Gastrocnemius medialis (tissue), 4 donors: ENCODE measurements at regions of chr5 and their contacts with region 1.

Region 1: DNA sequence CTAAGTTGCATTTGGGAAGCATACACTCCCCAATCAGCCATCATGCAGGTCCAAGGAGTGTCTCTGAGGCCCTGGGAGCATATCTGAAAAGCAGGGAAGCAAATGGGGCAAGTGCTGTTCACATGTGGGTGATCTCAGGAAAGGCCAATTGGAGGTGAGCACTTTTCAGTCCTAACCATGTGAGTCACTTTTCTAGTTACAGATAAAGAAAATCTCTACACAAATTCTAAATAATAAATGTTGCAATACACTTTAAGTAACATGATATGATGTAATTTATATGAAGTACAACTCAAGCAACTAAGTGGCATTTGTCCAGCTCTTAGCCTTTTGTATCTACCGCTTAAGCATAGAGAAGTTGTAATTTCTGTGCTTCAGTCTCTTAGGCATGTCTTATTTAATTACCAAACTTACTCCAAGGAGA is 18.4 kb downstream of the ADAMTS16 start:
- DNase-seq: no peak
- ATAC-seq: no peak
- H3K4me3 ChIP-seq: no peak overlapping the region
- H3K27ac ChIP-seq: no peak overlapping the region
- H3K4me1 ChIP-seq: peaks cover 25% of the 10 kb centered on the region in 2 donors
- H3K27me3 ChIP-seq: no peaks in the 10 kb centered on the region
- CTCF ChIP-seq: no peak
- POLR2A ChIP-seq: no peak

Region 2: GRCh38 chr5:5313101-5313635 is 154.7 kb after region 1 on chr5:
- in situ Hi-C with region 1: no loop called
- intact Hi-C with region 1: loop called (anchors 10 kb)
- DNase-seq: peak; percentile 58 to 65
- ATAC-seq: peak; percentile 70 to 81
- H3K4me3 ChIP-seq: no peak overlapping the region
- H3K27ac ChIP-seq: peak overlapping the region; percentile 71 to 84 (median 80)
- H3K4me1 ChIP-seq: peaks cover 35 to 36% of the 10 kb centered on the region in 2 donors
- H3K27me3 ChIP-seq: no peaks in the 10 kb centered on the region
- CTCF ChIP-seq: no peak
- POLR2A ChIP-seq: peak in 1 of 2 donors; percentile 31

Region 3: GRCh38 chr5:5331838-5332237 is 173.4 kb after region 1 on chr5:
- in situ Hi-C with region 1: no loop called
- intact Hi-C with region 1: no loop called
- DNase-seq: no peak
- ATAC-seq: no peak
- H3K4me3 ChIP-seq: no peak overlapping the region
- H3K27ac ChIP-seq: no peak overlapping the region
- H3K4me1 ChIP-seq: peaks cover 6 to 10% of the 10 kb centered on the region in 2 donors
- H3K27me3 ChIP-seq: no peaks in the 10 kb centered on the region
- CTCF ChIP-seq: no peak
- POLR2A ChIP-seq: no peak

Region 4: DNA sequence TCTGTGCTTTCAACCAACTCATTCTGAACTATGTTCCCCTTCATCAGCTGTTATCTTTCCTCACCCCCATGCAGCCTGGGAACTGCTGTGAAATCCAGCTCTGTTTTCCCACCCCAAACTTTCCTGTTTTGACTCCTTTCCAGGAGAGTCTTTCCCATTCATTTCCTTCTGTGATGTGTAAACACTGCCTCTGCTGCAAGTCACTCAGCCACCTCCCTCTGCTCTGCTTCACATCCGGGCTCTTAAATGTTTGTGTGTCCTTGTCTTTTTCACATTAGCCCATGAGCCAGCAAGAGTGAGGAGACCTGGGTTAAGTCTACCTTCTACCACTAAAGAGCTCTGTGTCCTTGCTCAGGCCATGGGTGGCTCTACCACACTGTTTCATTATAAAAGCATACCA is 401.5 kb after region 1 on chr5:
- in situ Hi-C with region 1: no loop called
- intact Hi-C with region 1: no loop called
- DNase-seq: no peak
- ATAC-seq: no peak
- H3K4me3 ChIP-seq: no peak overlapping the region
- H3K27ac ChIP-seq: no peak overlapping the region
- H3K4me1 ChIP-seq: no peaks in the 10 kb centered on the region
- H3K27me3 ChIP-seq: no peaks in the 10 kb centered on the region
- CTCF ChIP-seq: no peak
- POLR2A ChIP-seq: no peak